ENCODE measurements at regions of chr14 and their contacts with region 1.

Region 1: GRCh38 chr14:68248481-68249255 is 429.1 kb downstream of the RAD51B start:
- DNase-seq: peak in 3 of 10 donors; percentile 27 to 42 (median 34)
- H3K4me3 ChIP-seq: no peak overlapping the region
- H3K27ac ChIP-seq: peak overlapping the region in 47 of 59 donors; percentile 3 to 85 (median 60)
- H3K27me3 ChIP-seq: no peaks in the 10 kb centered on the region
- CTCF ChIP-seq: peak; percentile 57 to 91 (median 72)

Region 2: DNA sequence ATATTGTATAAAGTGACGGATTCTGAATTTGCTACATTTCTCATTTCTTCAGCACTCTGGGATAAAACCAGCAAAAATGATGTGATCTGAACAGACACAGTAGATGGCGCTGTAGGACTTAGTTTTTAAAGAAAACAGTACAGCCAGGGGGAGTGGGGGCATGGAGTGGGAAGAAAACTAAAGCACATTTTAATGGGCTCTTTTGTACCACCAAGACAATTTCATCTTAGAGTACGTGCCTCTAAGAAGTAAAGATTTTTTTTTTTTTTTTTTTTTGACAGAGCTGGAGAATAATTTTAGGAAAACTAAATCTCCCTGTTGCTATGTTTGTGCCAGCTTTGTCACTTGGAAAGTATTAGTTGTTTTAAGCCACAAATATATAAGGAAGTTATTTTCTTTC is 304.7 kb before region 1 on chr14:
- intact Hi-C with region 1: loop called in 1 of 2 experiments (anchors 10 kb)
- DNase-seq: peak in 6 of 10 donors; percentile 7 to 70 (median 32)
- H3K4me3 ChIP-seq: peak overlapping the region in 1 of 59 donors; percentile 16
- H3K27ac ChIP-seq: no peak overlapping the region
- H3K27me3 ChIP-seq: no peaks in the 10 kb centered on the region
- CTCF ChIP-seq: peak; percentile 64 to 90 (median 80)

Region 3: DNA sequence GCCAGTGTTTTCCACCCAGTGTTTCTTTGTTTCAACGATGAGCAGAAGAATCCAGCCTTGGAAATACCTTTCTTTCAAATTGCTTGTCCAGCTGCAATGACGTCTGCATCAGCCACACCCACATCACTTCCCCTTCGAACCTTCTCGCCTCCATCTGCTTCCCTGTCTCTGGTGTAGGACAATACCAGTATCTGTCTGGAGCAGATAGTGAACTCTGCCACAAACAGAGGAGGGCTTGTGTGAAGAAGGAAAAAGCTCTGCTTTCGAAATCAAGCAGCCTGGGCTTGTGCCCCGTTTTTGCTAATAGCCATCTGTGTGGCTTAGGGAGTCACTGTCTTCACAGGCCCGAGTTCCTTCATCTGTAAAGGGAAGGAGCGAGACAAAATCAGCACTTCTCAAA is 128.8 kb after region 1 on chr14:
- intact Hi-C with region 1: loop called in 1 of 2 experiments (anchors 10 kb)
- DNase-seq: peak in 8 of 10 donors; percentile 44 to 76 (median 62)
- H3K4me3 ChIP-seq: peak overlapping the region in 4 of 59 donors; percentile 20 to 27 (median 24)
- H3K27ac ChIP-seq: peak overlapping the region in 52 of 59 donors; percentile 3 to 85 (median 64)
- H3K27me3 ChIP-seq: no peaks in the 10 kb centered on the region
- CTCF ChIP-seq: peak in 4 of 56 donors; percentile 8 to 37 (median 16)

Region 4: DNA sequence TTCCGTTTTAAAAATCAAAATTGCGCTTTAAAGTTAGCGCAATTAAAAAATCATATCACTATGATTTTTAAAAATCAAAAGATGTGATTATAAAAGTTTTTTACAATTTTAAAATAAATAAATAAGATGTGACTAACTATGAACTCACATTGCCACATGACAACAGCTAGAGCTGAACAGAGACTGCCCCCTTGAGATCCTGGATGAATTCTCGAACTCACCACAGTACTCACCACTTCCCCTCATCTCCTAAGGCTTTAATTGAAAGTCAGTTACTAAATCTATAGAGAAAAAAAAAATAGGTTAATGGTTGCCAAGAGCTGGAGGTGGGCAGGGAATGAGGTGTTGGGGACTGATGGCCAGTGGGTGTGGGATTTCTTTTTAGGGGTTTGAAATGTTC is 160.0 kb after region 1 on chr14:
- intact Hi-C with region 1: loop called in 1 of 2 experiments (anchors 5 kb)
- DNase-seq: no peak
- H3K4me3 ChIP-seq: no peak overlapping the region
- H3K27ac ChIP-seq: no peak overlapping the region
- H3K27me3 ChIP-seq: no peaks in the 10 kb centered on the region
- CTCF ChIP-seq: peak in 38 of 56 donors; percentile 11 to 63 (median 30)

Region 5: GRCh38 chr14:68627880-68628607 is 379.4 kb after region 1 on chr14:
- intact Hi-C with region 1: loop called in 1 of 2 experiments (anchors 10 kb)
- DNase-seq: peak; percentile 25 to 82 (median 76)
- H3K4me3 ChIP-seq: peak overlapping the region; percentile 26 to 80 (median 59)
- H3K27ac ChIP-seq: peak overlapping the region; percentile 18 to 97 (median 82)
- H3K27me3 ChIP-seq: no peaks in the 10 kb centered on the region
- CTCF ChIP-seq: peak in 2 of 56 donors; percentile 8 to 27

Region 6: GRCh38 chr14:68788996-68789820 is 540.5 kb after region 1 on chr14:
- intact Hi-C with region 1: loop called in 1 of 2 experiments (anchors 2 kb)
- DNase-seq: peak; percentile 35 to 82 (median 76)
- H3K4me3 ChIP-seq: peak overlapping the region; percentile 49 to 83 (median 66)
- H3K27ac ChIP-seq: peak overlapping the region in 58 of 59 donors; percentile 39 to 99 (median 91)
- H3K27me3 ChIP-seq: peaks cover 0 to 47% (median 22%) of the 10 kb centered on the region in 45 donors
- CTCF ChIP-seq: peak; percentile 48 to 87 (median 76)

Region 7: DNA sequence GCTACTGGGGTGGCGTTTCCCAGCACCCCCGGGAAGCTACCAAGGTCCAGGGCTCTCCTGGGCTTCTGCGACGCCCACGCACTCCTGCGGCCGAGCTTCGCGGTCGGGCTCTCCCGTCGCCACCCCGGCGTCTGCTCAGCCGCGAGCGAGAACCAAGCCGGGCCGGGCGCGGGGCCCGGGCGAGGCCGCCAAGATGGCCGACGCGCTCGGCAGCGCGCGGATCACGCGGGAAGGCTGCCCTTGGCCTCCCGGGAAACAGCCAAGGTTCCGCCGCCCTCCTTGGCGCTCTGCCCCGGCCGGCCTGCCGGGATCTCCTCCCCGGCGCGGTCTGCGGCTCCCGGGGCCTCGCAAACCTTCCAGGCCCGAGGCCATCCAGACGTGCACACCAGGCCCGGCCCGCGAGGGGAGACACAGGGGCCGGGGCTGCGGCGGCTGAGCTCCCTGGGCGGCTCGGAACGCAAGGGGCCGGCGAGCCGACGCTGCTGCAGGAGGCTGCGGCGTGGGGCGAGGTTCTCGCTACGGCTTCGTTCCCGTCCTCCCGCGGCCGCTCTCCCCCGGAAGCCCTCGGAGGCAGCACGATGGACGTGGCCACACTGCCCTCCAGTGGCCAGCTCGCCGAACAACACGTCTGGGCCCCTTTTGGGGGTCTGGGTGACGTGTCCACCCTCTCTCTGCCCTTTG is 567.7 kb after region 1 on chr14:
- intact Hi-C with region 1: loop called (anchors 1 kb)
- DNase-seq: peak; percentile 71 to 90 (median 85)
- H3K4me3 ChIP-seq: peak overlapping the region; percentile 40 to 79 (median 64)
- H3K27ac ChIP-seq: peak overlapping the region; percentile 74 to 100 (median 99)
- H3K27me3 ChIP-seq: no peaks in the 10 kb centered on the region
- CTCF ChIP-seq: peak; percentile 87 to 100 (median 98)

Measured in dorsolateral prefrontal cortex (tissue), 120 donors.